ENCODE measurements at regions of chr17 and their contacts with region 1.

Region 1: DNA sequence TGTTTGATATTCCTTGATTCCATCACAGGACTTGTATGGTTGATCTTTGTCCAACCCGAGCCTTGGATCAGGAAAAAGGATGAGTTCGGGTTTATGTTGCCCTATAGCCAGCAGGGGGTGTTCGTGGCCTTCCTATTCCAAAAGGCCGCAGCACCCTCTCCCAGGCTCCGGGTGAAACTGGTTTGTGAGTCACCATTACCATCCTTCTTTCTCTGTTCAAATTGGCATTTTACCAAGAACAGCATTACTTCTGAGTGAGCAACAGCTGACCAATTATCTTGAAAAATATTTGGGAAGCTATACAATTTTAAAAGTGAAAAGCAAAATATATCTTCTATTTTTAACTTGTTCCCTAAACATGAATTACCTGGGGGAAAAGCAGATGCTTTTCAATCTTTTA is 24.3 kb upstream of the KRT20 start:
- DNase-seq: peak; percentile 96
- H3K4me3 ChIP-seq: no peak overlapping the region
- H3K27ac ChIP-seq: peak overlapping the region; percentile 98
- H3K4me1 ChIP-seq: peaks cover 47% of the 10 kb centered on the region
- H3K27me3 ChIP-seq: no peaks in the 10 kb centered on the region
- CTCF ChIP-seq: peak; percentile 76 to 84

Region 2: DNA sequence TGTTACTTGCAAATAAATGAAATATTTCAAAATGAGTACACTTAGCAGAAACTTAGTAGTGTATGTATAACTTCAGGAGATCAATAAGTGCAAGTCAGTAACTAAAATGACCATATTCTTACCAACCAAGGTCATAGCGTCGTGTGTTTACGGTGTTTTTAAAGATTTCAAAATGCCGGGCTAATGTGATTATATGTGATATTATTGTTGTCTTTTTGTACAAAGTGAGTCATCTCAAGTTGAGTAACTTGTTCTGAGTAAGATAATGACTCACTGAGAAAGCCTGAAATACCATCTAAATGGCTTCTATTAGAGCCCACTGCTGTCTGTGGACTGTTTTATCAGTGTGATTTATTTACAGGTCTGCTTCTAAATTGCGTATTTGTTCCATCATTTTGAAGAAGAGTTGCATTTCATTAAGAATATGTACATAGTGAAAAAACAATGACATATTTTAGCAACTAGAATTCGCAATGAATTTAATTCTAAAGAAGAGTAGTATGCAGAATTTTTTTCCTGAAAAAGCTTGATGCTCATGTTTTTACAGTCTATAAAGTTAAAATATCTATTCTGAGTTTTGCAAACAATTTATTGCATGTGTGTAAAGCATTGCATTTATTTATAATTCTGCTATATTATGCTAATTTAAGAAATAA is 55.1 kb before region 1 on chr17:
- CTCF ChIA-PET with region 1: interaction called, 3 read pairs
- dilution Hi-C with region 1: no loop called
- in situ Hi-C with region 1: loop called in 1 of 2 experiments (anchors 5 kb)
- intact Hi-C with region 1: loop called (anchors 1 kb)
- DNase-seq: peak; percentile 84
- H3K4me3 ChIP-seq: no peak overlapping the region
- H3K27ac ChIP-seq: no peak overlapping the region
- H3K4me1 ChIP-seq: peaks cover 20% of the 10 kb centered on the region
- H3K27me3 ChIP-seq: no peaks in the 10 kb centered on the region
- CTCF ChIP-seq: no peak

Region 3: GRCh38 chr17:41042953-41043352 is 133.6 kb after region 1 on chr17:
- CTCF ChIA-PET with region 1: no interaction called
- dilution Hi-C with region 1: no loop called
- in situ Hi-C with region 1: no loop called
- intact Hi-C with region 1: loop called (anchors 5 kb)
- DNase-seq: no peak
- H3K4me3 ChIP-seq: no peak overlapping the region
- H3K27ac ChIP-seq: no peak overlapping the region
- H3K4me1 ChIP-seq: no peaks in the 10 kb centered on the region
- H3K27me3 ChIP-seq: no peaks in the 10 kb centered on the region
- CTCF ChIP-seq: no peak

Region 4: DNA sequence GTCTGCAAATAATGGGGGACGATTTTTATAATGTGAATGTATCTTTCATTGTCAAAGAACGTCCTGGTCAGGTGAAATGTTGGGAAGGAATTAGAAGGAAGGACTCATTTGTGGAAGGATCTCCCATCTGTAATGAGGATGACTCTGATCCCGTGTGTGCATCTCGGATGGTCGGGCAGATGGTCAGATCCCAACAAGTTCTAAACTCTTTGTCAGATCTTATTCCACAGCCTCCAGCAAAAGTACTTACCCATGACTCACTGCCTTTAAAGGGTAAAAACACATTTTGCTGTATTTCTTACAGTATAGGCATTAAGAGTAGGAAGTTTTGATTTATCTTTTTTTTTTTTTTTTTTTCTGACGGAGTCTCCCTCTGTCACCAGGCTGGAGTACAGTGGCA is 189.1 kb after region 1 on chr17:
- CTCF ChIA-PET with region 1: no interaction called
- dilution Hi-C with region 1: no loop called
- in situ Hi-C with region 1: no loop called
- intact Hi-C with region 1: no loop called
- DNase-seq: peak; percentile 76
- H3K4me3 ChIP-seq: no peak overlapping the region
- H3K27ac ChIP-seq: peak overlapping the region; percentile 40
- H3K4me1 ChIP-seq: peaks cover 13% of the 10 kb centered on the region
- H3K27me3 ChIP-seq: no peaks in the 10 kb centered on the region
- CTCF ChIP-seq: no peak

Region 5: GRCh38 chr17:41263212-41263611 is 353.9 kb after region 1 on chr17:
- CTCF ChIA-PET with region 1: no interaction called
- dilution Hi-C with region 1: no loop called
- in situ Hi-C with region 1: no loop called
- intact Hi-C with region 1: loop called (anchors 1 kb)
- DNase-seq: no peak
- H3K4me3 ChIP-seq: no peak overlapping the region
- H3K27ac ChIP-seq: no peak overlapping the region
- H3K4me1 ChIP-seq: no peaks in the 10 kb centered on the region
- H3K27me3 ChIP-seq: peaks cover 2% of the 10 kb centered on the region
- CTCF ChIP-seq: no peak

Region 6: DNA sequence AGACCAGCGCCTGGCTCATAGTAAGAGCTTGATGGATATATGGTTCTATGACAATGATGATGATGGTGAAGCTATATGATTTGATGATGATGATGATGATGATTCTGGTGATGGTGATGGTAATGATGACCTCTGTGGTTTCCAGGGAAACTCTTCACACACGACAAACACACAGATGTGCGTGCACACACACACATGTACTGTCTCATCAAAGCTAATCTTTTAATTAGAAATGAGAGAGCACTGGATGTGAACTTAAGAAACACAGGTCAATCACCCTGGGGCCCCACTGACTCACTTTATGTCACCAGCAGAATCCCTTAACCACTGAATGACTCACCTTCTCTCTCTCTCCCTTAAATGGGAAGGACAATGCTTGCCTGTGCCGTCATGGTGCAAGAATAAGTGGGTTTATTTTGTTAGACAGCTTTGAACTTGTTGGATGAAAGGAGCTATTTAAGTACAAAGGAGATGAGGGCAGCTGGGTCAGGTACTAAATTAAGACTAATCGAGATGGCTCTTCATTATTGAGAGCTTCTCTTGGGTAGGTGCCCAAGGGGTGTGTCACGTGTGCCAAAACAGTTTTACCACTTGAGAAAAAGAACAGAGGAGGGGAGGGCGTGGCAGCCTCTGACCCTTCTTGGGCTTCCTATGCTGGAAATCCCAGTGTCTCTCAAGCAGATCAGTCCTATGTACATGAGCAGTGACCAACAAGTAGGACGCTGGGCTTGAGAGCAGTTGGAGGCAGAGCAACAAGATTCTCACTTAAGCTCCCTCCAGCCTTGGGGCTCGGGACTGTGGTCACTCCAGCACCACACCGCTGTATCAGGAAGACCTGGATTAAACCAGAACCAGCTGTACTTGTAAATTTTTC is 494.7 kb after region 1 on chr17:
- CTCF ChIA-PET with region 1: no interaction called
- dilution Hi-C with region 1: no loop called
- in situ Hi-C with region 1: no loop called
- intact Hi-C with region 1: loop called (anchors 1 kb)
- DNase-seq: peak; percentile 100
- H3K4me3 ChIP-seq: no peak overlapping the region
- H3K27ac ChIP-seq: peak overlapping the region; percentile 94
- H3K4me1 ChIP-seq: peaks cover 32% of the 10 kb centered on the region
- H3K27me3 ChIP-seq: no peaks in the 10 kb centered on the region
- CTCF ChIP-seq: no peak

Region 7: DNA sequence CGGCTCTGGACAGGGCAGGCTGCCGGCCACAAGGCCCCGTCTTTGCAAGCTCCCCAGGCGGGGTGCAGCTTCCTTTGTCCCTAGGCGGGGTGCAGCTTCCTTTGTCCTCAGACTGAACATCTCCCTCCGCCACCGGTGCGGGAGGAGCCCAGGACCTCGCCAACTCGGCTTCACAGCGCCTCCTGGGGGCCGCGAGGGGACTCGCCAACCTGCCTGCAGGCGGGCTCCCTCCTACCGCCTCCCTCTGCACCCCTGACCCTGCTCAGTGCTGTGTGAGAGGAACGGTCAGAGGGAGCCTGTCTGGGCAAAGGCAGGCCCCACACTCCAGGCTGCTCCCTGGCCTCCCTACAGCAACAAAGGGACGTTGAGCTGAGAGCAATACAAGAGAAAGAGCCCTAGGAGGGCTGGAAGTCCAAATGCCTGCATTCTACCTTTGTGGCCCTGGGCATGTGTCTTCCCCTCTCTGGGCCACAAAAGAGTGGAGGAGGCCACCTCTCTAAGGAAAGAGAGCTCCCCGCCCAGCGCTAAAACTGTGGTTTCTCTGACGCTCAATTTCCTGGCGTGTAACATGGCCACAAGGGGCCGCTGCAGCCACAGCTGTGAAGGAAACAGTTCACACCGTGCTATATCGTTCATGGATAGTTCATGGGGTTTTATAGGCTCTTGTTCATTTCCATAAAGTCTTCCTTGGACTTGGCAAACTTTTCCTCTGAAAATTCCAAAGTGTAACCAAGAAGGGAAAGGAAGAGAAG is 639.7 kb after region 1 on chr17:
- CTCF ChIA-PET with region 1: interaction called, 6 read pairs
- dilution Hi-C with region 1: no loop called
- in situ Hi-C with region 1: no loop called
- intact Hi-C with region 1: loop called (anchors 1 kb)
- DNase-seq: peak; percentile 91
- H3K4me3 ChIP-seq: peak overlapping the region in 1 of 3 experiments; percentile 23
- H3K27ac ChIP-seq: peak overlapping the region; percentile 85
- H3K4me1 ChIP-seq: peaks cover 52% of the 10 kb centered on the region
- H3K27me3 ChIP-seq: no peaks in the 10 kb centered on the region
- CTCF ChIP-seq: peak; percentile 91 to 96

Measured in mammary epithelial cell (primary cell).